Activated CD8-positive, alpha-beta T cell treated with anti-CD3 and anti-CD28 coated beads, Interleukin-2, amount 10 ng/mL, durations not matched to agents 7 days and 5 days (primary cell): ENCODE measurements at regions of chr4 and their contacts with region 1.

Region 1: DNA sequence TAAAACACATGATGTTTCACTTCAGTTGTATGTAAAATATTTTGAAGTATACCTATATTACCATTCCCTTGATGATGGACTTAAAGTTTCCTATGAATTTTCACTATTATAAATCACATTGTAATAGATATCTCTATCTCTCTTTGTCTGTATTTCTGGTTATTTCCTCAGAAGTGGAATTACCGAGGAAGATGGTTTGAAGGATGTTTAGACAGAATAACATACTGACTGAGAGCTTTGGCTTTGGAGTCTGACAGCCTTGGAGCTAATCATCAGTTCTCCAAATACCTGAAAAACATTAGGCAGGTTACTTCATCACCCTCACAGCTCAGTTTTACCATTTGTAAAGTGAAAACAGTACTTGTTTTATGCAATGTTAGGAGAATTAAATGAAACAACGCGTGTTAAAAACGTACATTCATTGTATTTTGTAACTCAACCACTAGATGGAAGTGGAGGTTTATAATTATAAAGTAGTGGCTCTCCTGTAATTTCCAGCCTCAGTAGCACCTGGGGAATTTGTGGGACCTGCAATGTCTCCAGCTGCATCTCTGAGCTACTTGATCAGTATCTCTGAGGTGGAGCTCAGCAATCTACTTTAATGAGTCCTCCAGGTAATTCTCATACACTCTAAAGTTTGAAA is 14.3 kb downstream of the JCHAIN start:
- DNase-seq: no peak
- ATAC-seq: peak; percentile 55
- H3K4me3 Mint-ChIP-seq: no peak overlapping the region
- H3K27ac Mint-ChIP-seq: no peak overlapping the region
- H3K4me1 Mint-ChIP-seq: peaks cover 8% of the 10 kb centered on the region
- H3K27me3 Mint-ChIP-seq: peaks cover 7% of the 10 kb centered on the region

Region 2: DNA sequence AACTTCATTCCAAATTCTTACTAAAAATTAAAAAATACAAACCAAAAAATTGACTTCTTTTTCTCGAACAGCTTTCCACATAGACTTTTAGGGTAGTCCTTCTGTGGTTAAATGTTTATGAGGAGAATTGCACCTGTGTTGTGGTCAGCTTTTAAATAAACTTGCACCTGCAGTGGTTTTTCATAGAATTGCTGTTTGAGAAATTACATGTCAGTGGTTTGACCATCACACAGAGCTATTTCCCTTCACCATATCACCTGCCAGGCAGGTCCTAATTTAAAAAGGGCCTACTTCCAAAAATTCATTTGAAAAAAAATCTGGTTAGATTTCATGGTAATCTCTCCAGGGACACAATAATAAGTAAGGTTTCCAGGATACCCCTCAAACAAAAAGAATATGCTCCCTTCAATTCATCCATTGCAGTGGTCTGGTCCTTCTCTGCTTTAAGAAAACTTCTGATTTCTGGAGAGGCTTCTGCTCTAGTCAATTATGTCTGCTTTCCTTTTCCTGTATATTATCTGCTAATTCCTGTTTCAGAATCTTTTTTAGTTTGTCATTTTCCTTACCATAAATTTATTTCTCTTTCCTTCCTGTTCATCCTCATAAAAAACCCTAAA is 26.5 kb after region 1 on chr4:
- CTCF ChIA-PET with region 1: interaction called, 14 read pairs
- POLR2A ChIA-PET with region 1: no interaction called
- DNase-seq: peak; percentile 37
- ATAC-seq: peak; percentile 69
- H3K4me3 Mint-ChIP-seq: peak overlapping the region; percentile 44
- H3K27ac Mint-ChIP-seq: peak overlapping the region; percentile 80
- H3K4me1 Mint-ChIP-seq: peaks cover 53% of the 10 kb centered on the region
- H3K27me3 Mint-ChIP-seq: peaks cover 3% of the 10 kb centered on the region

Region 3: DNA sequence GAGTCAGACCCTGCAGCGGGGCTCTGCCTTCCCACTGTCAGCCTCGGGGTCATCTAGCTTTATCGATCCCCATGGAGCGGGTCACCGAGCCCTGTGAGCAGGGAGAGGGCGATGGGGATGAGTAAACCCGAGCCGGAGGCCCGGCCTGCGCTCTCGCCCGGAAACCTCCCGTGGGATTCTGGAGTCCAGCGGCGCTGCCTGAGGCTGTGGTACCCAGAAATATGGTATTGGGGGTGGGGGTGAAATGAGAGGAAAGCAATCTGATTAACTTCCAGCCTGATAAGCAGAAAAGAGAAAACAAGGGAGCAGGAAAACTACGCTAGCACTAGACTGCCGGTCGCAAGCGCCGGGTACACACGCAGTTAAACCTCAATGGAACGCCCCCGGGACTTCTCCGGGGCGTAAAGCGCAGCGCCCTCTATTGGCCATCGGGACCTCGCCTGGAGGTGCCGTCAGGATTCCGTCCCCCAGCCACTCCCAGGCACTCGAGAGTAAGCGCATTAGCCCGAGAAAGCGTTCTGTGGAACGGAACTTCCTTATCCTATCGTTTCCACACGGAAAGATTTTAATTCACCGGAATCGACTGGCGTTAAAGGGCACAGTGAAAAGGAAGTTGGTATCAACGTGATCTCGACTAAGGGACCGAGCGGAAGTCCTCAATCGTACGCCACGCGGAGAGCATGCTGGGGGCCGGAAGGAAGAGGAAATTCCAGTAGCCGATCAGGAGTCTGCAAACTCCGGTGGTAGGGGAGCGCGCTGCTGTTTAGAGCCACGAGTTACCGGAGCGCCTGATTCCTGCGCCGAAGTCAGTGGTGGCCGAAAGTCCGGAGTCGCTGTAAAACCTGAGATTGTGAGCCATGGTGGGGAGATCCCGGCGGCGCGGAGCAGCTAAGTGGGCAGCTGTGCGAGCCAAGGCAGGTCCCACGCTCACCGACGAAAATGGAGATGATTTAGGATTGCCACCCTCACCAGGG is 36.1 kb after region 1 on chr4 and contains the start of gene UTP3:
- CTCF ChIA-PET with region 1: interaction called, 22 read pairs
- POLR2A ChIA-PET with region 1: no interaction called
- DNase-seq: peak; percentile 95
- ATAC-seq: peak; percentile 94
- H3K4me3 Mint-ChIP-seq: peak within 1 kb of the TSS; percentile 97
- H3K27ac Mint-ChIP-seq: peak within 1 kb of the TSS; percentile 92
- H3K4me1 Mint-ChIP-seq: peaks cover 30% of the 10 kb centered on the region
- H3K27me3 Mint-ChIP-seq: no peaks in the 10 kb centered on the region
- total RNA-seq, gene UTP3: 38.7 to 39.2 TPM